BJ (cell line): ENCODE measurements at regions of chr6 and their contacts with region 1.

Region 1: GRCh38 chr6:108592371-108593337 is 31.9 kb downstream of the FOXO3 start:
- DNase-seq: peak; percentile 81
- H3K4me3 ChIP-seq: no peak overlapping the region
- H3K27me3 ChIP-seq: no peaks in the 10 kb centered on the region
- CTCF ChIP-seq: no peak

Region 2: DNA sequence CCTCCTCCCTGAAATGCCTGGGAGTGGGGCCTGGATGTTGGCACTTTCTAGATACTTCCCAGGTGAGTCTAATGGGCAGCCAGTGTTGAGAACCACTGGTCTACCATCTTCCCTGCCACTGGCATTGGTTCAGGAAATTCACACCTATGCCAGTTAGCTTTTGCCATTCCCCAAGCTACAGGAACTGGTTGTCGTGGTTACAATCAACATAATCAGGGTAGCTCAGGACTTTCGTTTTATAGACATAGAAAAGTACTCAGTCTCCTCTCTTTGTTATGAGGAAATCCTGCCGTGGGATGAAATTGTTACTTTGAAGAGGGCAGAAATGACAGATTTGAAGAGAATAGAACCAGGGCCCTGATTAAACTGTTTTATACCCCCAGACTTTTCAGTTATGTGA is 159.9 kb before region 1 on chr6:
- CTCF ChIA-PET with region 1: no interaction called
- POLR2A ChIA-PET with region 1: no interaction called
- DNase-seq: no peak
- H3K4me3 ChIP-seq: no peak overlapping the region
- H3K27me3 ChIP-seq: no peaks in the 10 kb centered on the region
- CTCF ChIP-seq: no peak

Region 3: DNA sequence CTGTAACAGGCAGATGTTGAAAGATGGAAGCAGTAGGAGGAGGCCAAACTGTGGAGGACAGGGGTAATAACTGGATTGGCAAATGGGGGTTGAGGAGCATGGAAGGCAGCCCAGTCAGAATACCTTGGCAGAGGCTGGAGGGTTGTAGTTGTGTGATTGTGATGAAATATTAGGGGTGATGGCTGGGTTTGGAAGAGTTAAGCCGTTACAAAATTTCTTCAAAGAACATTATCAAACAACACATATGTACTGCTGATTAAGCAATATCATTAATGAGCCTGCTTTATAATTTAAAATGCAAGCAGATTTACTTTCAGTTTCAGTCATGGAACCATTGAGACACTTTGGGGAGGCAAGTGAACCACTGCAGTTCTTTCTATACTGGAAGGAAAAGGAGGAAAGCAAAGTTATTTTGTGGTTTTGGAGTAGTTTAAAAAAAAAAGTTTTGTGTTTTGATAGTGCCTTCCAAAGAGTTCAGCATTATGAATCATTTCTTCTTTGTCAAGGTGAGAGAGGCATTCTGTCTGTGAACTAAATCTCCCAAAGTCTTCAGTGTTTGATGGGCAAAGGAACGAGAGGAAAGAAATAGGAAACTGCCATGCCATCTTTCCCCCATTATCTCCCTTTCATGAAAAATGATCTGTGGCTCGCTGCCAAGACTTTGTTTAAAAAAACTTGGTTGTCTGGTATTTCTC is 11.3 kb before region 1 on chr6:
- CTCF ChIA-PET with region 1: no interaction called
- POLR2A ChIA-PET with region 1: no interaction called
- DNase-seq: no peak
- H3K4me3 ChIP-seq: peak overlapping the region; percentile 5; the same call in 1 of the 2 replicates
- H3K27me3 ChIP-seq: no peaks in the 10 kb centered on the region
- CTCF ChIP-seq: no peak

Region 4: DNA sequence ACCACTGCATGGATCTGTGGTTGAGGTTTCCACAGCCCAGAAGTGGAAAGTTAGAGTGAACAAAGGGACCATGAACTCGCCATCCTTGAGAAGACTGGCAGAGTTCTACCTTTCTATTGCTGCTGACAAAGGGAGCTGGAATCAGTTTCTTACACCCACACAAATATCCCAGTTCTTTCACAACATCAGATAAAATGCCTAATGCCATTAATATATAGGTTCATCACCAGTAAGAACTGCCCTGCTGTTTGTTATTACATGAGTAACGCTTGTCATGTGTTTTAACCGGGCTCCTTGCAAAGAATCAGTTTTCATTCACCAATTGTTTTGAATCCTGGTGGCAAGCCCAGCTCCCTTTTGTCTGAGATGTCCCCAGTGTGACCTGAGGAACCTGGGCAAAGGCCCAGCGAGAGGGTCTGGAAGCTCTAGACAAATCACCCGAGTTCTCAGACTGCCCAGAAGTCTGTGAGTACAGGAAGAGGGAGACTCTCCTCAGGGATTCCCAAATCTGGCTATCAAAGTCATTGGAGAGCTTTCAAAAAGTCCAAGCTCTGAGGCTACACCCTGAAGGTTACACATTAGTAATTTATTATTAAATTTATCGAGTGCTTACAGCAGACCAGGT is 797.1 kb after region 1 on chr6:
- CTCF ChIA-PET with region 1: no interaction called
- POLR2A ChIA-PET with region 1: interaction called, 11 read pairs
- DNase-seq: no peak
- H3K4me3 ChIP-seq: no peak overlapping the region
- H3K27me3 ChIP-seq: peaks cover 1% of the 10 kb centered on the region; the same call in 1 of the 2 replicates
- CTCF ChIP-seq: no peak